Activated CD8-positive, alpha-beta T cell treated with anti-CD3 and anti-CD28 coated beads for 36 hours (primary cell): ENCODE measurements at regions of chr1 and their contacts with region 1.

Region 1: GRCh38 chr1:111507411-111508201 is 4.2 kb upstream of the ADORA3 start:
- DNase-seq: peak; percentile 83
- ATAC-seq: peak; percentile 76
- H3K4me3 Mint-ChIP-seq: peak overlapping the region; percentile 49
- H3K27ac Mint-ChIP-seq: peak overlapping the region; percentile 94
- H3K4me1 Mint-ChIP-seq: peaks cover 59% of the 10 kb centered on the region
- H3K27me3 Mint-ChIP-seq: no peaks in the 10 kb centered on the region
- CTCF ChIP-seq: no peak

Region 2: DNA sequence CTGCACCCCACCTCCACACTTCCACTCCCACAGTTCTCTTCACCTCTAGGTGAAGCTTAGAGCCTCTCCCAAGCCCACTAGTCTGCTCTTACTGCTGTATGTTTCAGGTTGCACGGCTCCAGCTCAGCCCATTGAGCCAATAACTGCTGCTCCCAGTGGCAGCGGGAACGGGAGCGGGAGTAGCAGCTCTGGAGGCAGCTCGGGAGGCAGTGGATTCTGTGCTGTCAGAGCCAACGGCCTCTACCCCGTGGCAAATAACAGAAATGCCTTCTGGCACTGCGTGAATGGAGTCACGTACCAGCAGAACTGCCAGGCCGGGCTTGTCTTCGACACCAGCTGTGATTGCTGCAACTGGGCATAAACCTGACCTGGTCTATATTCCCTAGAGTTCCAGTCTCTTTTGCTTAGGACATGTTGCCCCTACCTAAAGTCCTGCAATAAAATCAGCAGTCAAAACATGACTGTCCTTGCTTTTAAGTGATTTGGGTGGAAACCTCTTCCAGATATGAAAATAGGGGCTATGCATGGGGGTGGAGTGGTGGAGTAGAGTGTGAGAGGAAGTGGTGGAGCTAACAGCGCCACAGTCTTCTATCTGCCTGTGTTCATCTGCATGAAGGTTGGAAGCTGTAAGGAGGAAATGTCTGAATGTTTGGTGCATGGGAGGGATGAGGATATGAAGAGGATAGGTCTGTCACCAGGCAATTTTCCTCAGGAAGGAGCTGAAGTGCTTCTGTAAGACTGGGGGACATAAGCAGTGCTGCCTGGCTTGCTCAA is 187.3 kb before region 1 on chr1:
- CTCF ChIA-PET with region 1: no interaction called
- POLR2A ChIA-PET with region 1: no interaction called
- intact Hi-C with region 1: no loop called
- DNase-seq: no peak
- ATAC-seq: no peak
- H3K4me3 Mint-ChIP-seq: no peak overlapping the region
- H3K27ac Mint-ChIP-seq: no peak overlapping the region
- H3K4me1 Mint-ChIP-seq: peaks cover 12% of the 10 kb centered on the region
- H3K27me3 Mint-ChIP-seq: no peaks in the 10 kb centered on the region
- CTCF ChIP-seq: no peak

Region 3: GRCh38 chr1:111417755-111418154 is 89.9 kb before region 1 on chr1:
- CTCF ChIA-PET with region 1: no interaction called
- POLR2A ChIA-PET with region 1: no interaction called
- intact Hi-C with region 1: no loop called
- DNase-seq: no peak
- ATAC-seq: no peak
- H3K4me3 Mint-ChIP-seq: no peak overlapping the region
- H3K27ac Mint-ChIP-seq: no peak overlapping the region
- H3K4me1 Mint-ChIP-seq: no peaks in the 10 kb centered on the region
- H3K27me3 Mint-ChIP-seq: no peaks in the 10 kb centered on the region
- CTCF ChIP-seq: no peak

Region 4: GRCh38 chr1:111471012-111471411 is 36.6 kb before region 1 on chr1:
- CTCF ChIA-PET with region 1: interaction called, 99 read pairs
- POLR2A ChIA-PET with region 1: interaction called, 8 read pairs
- intact Hi-C with region 1: loop called (anchors 5 kb)
- DNase-seq: peak; percentile 87
- ATAC-seq: peak; percentile 83
- H3K4me3 Mint-ChIP-seq: no peak overlapping the region
- H3K27ac Mint-ChIP-seq: no peak overlapping the region
- H3K4me1 Mint-ChIP-seq: peaks cover 26% of the 10 kb centered on the region
- H3K27me3 Mint-ChIP-seq: no peaks in the 10 kb centered on the region
- CTCF ChIP-seq: no peak

Region 5: DNA sequence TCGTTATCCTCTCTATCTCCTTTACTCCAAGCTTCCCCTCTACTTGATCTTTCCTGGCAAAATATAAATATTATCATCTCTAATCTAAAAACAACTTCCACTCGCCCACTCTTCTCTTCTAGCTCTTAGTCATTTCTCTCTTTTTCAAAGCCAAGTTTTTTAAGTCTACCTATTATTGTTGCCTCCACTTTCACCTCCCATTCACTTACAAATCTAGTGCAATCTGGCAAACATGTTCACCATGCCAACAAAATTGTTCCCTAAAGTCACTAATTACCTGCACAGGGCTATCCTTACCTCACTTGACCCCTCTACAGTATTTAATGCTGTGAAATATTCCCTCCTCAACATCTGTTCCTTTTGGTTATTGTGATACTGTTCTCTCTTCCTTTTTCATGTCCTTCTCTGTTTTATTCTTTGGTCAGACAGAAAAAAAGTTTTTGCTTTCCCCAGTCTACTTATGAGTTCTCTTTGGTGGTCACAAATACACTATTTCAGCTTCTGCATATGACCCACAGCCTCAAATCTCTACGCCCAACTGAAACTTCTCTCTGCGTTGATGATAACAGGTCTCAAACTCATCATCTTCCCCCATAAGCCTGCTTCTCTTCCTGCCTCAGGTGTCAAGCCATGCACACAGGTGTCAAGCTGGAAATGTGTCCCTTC is 80.0 kb after region 1 on chr1:
- CTCF ChIA-PET with region 1: interaction called, 46 read pairs
- POLR2A ChIA-PET with region 1: interaction called, 17 read pairs
- intact Hi-C with region 1: no loop called
- DNase-seq: no peak
- ATAC-seq: peak; percentile 38
- H3K4me3 Mint-ChIP-seq: no peak overlapping the region
- H3K27ac Mint-ChIP-seq: no peak overlapping the region
- H3K4me1 Mint-ChIP-seq: peaks cover 29% of the 10 kb centered on the region
- H3K27me3 Mint-ChIP-seq: no peaks in the 10 kb centered on the region
- CTCF ChIP-seq: no peak

Region 6: GRCh38 chr1:111628153-111628552 is 120.5 kb after region 1 on chr1:
- CTCF ChIA-PET with region 1: interaction called, 17 read pairs
- POLR2A ChIA-PET with region 1: interaction called, 5 read pairs
- intact Hi-C with region 1: loop called (anchors 2 kb)
- DNase-seq: no peak
- ATAC-seq: no peak
- H3K4me3 Mint-ChIP-seq: peak overlapping the region; percentile 43
- H3K27ac Mint-ChIP-seq: peak overlapping the region; percentile 82
- H3K4me1 Mint-ChIP-seq: peaks cover 81% of the 10 kb centered on the region
- H3K27me3 Mint-ChIP-seq: no peaks in the 10 kb centered on the region
- CTCF ChIP-seq: no peak

Region 7: DNA sequence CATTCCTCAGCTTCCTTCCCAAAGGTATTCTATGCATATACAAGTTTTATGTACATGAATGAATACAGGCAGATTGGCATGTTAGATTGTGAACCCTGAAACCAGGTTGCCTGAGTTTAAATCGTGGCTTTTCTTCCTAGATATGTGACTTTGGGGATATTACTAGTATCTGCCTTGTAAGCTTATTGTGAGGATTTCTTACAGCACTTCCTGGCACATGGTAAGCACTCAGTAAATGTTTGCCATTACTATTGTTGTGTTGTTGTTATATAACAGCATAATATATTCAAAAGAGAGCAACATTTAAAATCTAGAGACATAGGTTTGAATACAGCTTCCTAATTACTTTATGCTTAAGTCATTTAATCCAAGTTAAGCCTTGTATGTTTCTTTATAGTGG is 157.0 kb after region 1 on chr1:
- CTCF ChIA-PET with region 1: interaction called, 16 read pairs
- POLR2A ChIA-PET with region 1: interaction called, 5 read pairs
- intact Hi-C with region 1: loop called (anchors 5 kb)
- DNase-seq: no peak
- ATAC-seq: peak; percentile 24
- H3K4me3 Mint-ChIP-seq: no peak overlapping the region
- H3K27ac Mint-ChIP-seq: peak overlapping the region; percentile 62
- H3K4me1 Mint-ChIP-seq: peaks cover 53% of the 10 kb centered on the region
- H3K27me3 Mint-ChIP-seq: no peaks in the 10 kb centered on the region
- CTCF ChIP-seq: no peak

Region 8: GRCh38 chr1:111704776-111705175 is 197.2 kb after region 1 on chr1:
- CTCF ChIA-PET with region 1: interaction called, 19 read pairs
- POLR2A ChIA-PET with region 1: no interaction called
- intact Hi-C with region 1: no loop called
- DNase-seq: no peak
- ATAC-seq: peak; percentile 53
- H3K4me3 Mint-ChIP-seq: no peak overlapping the region
- H3K27ac Mint-ChIP-seq: no peak overlapping the region
- H3K4me1 Mint-ChIP-seq: peaks cover 75% of the 10 kb centered on the region
- H3K27me3 Mint-ChIP-seq: no peaks in the 10 kb centered on the region
- CTCF ChIP-seq: no peak

Region 9: DNA sequence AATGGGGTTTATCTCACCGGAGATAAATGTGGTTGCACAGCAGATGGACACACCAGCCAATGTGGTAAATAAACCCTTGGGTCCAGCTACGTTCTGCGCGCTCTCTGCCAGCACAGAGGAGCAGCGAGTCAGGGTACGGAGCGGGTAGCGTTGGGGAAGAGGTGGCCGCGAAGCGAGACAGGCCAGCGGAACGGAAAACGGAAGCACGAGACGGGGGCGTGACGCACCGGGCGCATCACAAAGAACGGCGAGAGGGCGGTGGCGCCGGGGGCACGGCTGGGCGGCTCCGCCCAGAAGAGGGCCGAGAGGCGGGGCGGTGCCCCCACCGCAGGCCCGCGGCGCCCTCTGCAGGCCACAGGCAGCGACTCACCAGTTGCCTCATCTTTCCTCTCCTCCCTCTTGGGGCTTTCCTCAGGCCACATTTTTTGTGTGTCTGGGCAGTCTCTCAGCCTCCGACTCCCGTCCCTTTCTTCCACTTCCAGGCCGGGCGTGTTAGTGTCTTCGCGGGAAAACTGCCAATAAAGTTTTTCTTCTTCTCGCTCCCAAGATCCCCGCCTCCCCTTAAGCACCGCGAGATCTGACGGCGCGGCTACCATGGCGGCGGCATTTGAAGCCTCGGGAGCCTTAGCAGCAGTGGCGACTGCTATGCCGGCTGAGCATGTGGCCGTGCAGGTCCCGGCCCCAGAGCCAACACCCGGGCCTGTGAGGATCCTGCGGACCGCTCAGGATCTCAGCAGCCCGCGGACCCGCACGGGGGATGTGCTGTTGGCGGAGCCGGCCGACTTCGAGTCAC is 247.9 kb after region 1 on chr1 and contains the start of gene DDX20:
- CTCF ChIA-PET with region 1: interaction called, 43 read pairs
- POLR2A ChIA-PET with region 1: interaction called, 9 read pairs
- intact Hi-C with region 1: loop called (anchors 5 kb)
- DNase-seq: peak; percentile 96
- ATAC-seq: peak; percentile 93
- H3K4me3 Mint-ChIP-seq: peak within 1 kb of the TSS; percentile 88
- H3K27ac Mint-ChIP-seq: peak within 1 kb of the TSS; percentile 98
- H3K4me1 Mint-ChIP-seq: peaks cover 33% of the 10 kb centered on the region
- H3K27me3 Mint-ChIP-seq: no peaks in the 10 kb centered on the region
- CTCF ChIP-seq: peak; percentile 84
- total RNA-seq, gene DDX20: 15.3 to 15.9 TPM